Activated CD4-positive, alpha-beta T cell treated with anti-CD3 and anti-CD28 coated beads for 36 hours (primary cell): ENCODE measurements at regions of chr17 and their contacts with region 1.

Region 1: GRCh38 chr17:41738077-41738735 is 3.8 kb upstream of the HAP1 start:
- DNase-seq: peak; percentile 90
- ATAC-seq: peak; percentile 94
- H3K4me3 Mint-ChIP-seq: peak overlapping the region; percentile 6
- H3K27ac Mint-ChIP-seq: peak overlapping the region; percentile 73
- H3K4me1 Mint-ChIP-seq: peaks cover 5% of the 10 kb centered on the region
- H3K27me3 Mint-ChIP-seq: peaks cover 28% of the 10 kb centered on the region

Region 2: DNA sequence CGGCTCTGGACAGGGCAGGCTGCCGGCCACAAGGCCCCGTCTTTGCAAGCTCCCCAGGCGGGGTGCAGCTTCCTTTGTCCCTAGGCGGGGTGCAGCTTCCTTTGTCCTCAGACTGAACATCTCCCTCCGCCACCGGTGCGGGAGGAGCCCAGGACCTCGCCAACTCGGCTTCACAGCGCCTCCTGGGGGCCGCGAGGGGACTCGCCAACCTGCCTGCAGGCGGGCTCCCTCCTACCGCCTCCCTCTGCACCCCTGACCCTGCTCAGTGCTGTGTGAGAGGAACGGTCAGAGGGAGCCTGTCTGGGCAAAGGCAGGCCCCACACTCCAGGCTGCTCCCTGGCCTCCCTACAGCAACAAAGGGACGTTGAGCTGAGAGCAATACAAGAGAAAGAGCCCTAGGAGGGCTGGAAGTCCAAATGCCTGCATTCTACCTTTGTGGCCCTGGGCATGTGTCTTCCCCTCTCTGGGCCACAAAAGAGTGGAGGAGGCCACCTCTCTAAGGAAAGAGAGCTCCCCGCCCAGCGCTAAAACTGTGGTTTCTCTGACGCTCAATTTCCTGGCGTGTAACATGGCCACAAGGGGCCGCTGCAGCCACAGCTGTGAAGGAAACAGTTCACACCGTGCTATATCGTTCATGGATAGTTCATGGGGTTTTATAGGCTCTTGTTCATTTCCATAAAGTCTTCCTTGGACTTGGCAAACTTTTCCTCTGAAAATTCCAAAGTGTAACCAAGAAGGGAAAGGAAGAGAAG is 189.2 kb before region 1 on chr17:
- CTCF ChIA-PET with region 1: no interaction called
- POLR2A ChIA-PET with region 1: no interaction called
- intact Hi-C with region 1: no loop called
- DNase-seq: peak; percentile 93
- ATAC-seq: peak; percentile 81
- H3K4me3 Mint-ChIP-seq: no peak overlapping the region
- H3K27ac Mint-ChIP-seq: peak overlapping the region; percentile 42
- H3K4me1 Mint-ChIP-seq: peaks cover 22% of the 10 kb centered on the region
- H3K27me3 Mint-ChIP-seq: peaks cover 10% of the 10 kb centered on the region

Region 3: GRCh38 chr17:41801374-41802271 is 63.4 kb after region 1 on chr17:
- CTCF ChIA-PET with region 1: interaction called, 33 read pairs
- POLR2A ChIA-PET with region 1: no interaction called
- intact Hi-C with region 1: loop called (anchors 1 kb)
- DNase-seq: peak; percentile 86
- ATAC-seq: peak; percentile 95
- H3K4me3 Mint-ChIP-seq: no peak overlapping the region
- H3K27ac Mint-ChIP-seq: no peak overlapping the region
- H3K4me1 Mint-ChIP-seq: peaks cover 4% of the 10 kb centered on the region
- H3K27me3 Mint-ChIP-seq: no peaks in the 10 kb centered on the region

Region 4: GRCh38 chr17:41811549-41812380 is 73.6 kb after region 1 on chr17 and contains the start of gene P3H4:
- CTCF ChIA-PET with region 1: interaction called, 5 read pairs
- POLR2A ChIA-PET with region 1: no interaction called
- intact Hi-C with region 1: loop called in 1 of 2 experiments (anchors 2 kb)
- DNase-seq: peak; percentile 86
- ATAC-seq: peak; percentile 90
- H3K4me3 Mint-ChIP-seq: peak within 1 kb of the TSS; percentile 76
- H3K27ac Mint-ChIP-seq: peak within 1 kb of the TSS; percentile 58
- H3K4me1 Mint-ChIP-seq: peaks cover 22% of the 10 kb centered on the region
- H3K27me3 Mint-ChIP-seq: peaks cover 2% of the 10 kb centered on the region
- total RNA-seq, gene P3H4: 1.5 to 2.0 TPM

Region 5: GRCh38 chr17:41864836-41865595 is 126.8 kb after region 1 on chr17 and contains the start of gene KLHL11:
- CTCF ChIA-PET with region 1: interaction called, 3 read pairs
- POLR2A ChIA-PET with region 1: no interaction called
- intact Hi-C with region 1: loop called in 1 of 2 experiments (anchors 10 kb)
- DNase-seq: peak; percentile 94
- ATAC-seq: peak; percentile 88
- H3K4me3 Mint-ChIP-seq: no peak within 1 kb of the TSS
- H3K27ac Mint-ChIP-seq: peak within 1 kb of the TSS; percentile 68
- H3K4me1 Mint-ChIP-seq: peaks cover 49% of the 10 kb centered on the region
- H3K27me3 Mint-ChIP-seq: no peaks in the 10 kb centered on the region
- total RNA-seq, gene KLHL11: 16.4 to 18.0 TPM

Region 6: GRCh38 chr17:41885733-41886132 is 147.5 kb after region 1 on chr17:
- CTCF ChIA-PET with region 1: interaction called, 3 read pairs
- POLR2A ChIA-PET with region 1: no interaction called
- intact Hi-C with region 1: loop called in 1 of 2 experiments (anchors 1 kb)
- DNase-seq: no peak
- ATAC-seq: no peak
- H3K4me3 Mint-ChIP-seq: no peak overlapping the region
- H3K27ac Mint-ChIP-seq: no peak overlapping the region
- H3K4me1 Mint-ChIP-seq: no peaks in the 10 kb centered on the region
- H3K27me3 Mint-ChIP-seq: no peaks in the 10 kb centered on the region

Region 7: DNA sequence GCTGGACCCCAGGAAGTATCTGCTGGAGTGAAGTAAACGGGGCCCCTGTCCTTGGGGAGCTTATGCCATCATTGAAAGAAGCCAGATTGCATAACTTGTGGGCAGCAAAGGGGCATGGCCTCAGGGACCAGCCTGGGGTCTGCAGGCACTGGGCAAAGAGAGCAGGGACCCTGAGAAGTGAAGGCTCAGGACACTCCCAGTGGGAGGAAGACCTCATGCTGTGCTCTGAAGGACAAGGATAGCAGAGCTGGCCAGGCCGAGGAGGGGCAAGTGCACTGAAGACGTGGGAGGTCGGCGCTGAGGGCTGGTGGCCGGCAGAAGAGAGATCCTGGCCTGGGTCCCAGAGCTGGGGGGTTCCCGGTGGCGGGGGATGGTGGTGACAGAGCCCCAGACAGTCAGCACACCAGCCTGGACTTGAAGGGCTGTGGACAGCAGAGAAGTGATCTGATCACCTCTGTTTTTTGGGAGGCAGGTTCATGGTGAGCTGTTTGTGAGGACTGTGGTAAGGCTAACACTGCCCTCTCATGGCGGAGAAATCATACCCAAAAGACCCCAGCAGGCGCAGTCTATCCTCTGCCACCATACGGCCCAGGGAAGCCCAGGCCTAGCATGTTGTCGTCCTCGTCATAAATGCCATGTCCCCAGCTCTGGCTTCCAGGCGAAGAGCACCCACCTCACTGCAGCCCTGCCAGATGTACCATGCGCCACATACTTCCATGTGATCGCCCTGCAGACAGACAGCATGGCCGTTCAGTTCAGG is 221.3 kb after region 1 on chr17:
- CTCF ChIA-PET with region 1: interaction called, 6 read pairs
- POLR2A ChIA-PET with region 1: no interaction called
- intact Hi-C with region 1: loop called in 1 of 2 experiments (anchors 1 kb)
- DNase-seq: peak; percentile 17
- ATAC-seq: no peak
- H3K4me3 Mint-ChIP-seq: no peak overlapping the region
- H3K27ac Mint-ChIP-seq: no peak overlapping the region
- H3K4me1 Mint-ChIP-seq: no peaks in the 10 kb centered on the region
- H3K27me3 Mint-ChIP-seq: peaks cover 2% of the 10 kb centered on the region